ENCODE measurements at regions of chr11 and their contacts with region 1.

Region 1: GRCh38 chr11:84780689-84781293 is 846.4 kb downstream of the DLG2 start:
- DNase-seq: peak; percentile 32
- ATAC-seq: no peak
- H3K4me3 ChIP-seq: no peak overlapping the region
- H3K4me3 Mint-ChIP-seq: no peak overlapping the region
- H3K27ac ChIP-seq: no peak overlapping the region
- H3K27ac Mint-ChIP-seq: no peak overlapping the region
- H3K4me1 ChIP-seq: no peaks in the 10 kb centered on the region
- H3K4me1 Mint-ChIP-seq: no peaks in the 10 kb centered on the region
- H3K27me3 ChIP-seq: no peaks in the 10 kb centered on the region
- H3K27me3 Mint-ChIP-seq: no peaks in the 10 kb centered on the region
- CTCF ChIP-seq: peak; percentile 29

Region 2: GRCh38 chr11:84663731-84664130 is 117.1 kb before region 1 on chr11:
- CTCF ChIA-PET with region 1: no interaction called
- POLR2A ChIA-PET with region 1: no interaction called
- intact Hi-C with region 1: no loop called
- DNase-seq: no peak
- ATAC-seq: no peak
- H3K4me3 ChIP-seq: no peak overlapping the region
- H3K4me3 Mint-ChIP-seq: no peak overlapping the region
- H3K27ac ChIP-seq: no peak overlapping the region
- H3K27ac Mint-ChIP-seq: no peak overlapping the region
- H3K4me1 ChIP-seq: no peaks in the 10 kb centered on the region
- H3K4me1 Mint-ChIP-seq: no peaks in the 10 kb centered on the region
- H3K27me3 ChIP-seq: no peaks in the 10 kb centered on the region
- H3K27me3 Mint-ChIP-seq: no peaks in the 10 kb centered on the region
- CTCF ChIP-seq: no peak

Region 3: DNA sequence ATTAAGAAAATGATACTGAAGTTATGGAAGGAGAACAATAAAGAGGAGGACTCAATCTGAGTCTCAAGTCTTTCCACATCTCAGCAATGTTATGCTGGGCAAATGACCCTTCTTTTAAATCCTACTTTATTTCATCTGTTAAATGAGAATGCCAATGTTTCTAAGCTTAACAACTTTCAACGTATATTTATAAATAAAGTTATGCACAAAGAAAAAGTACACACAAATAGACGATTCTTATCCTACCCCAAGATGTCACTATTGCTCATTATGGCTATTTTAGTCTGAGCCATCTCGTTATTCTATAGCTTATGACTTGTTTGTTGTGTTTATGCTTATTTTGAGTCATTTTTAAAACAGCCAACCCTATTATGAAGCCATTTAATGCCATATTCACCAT is 12.8 kb before region 1 on chr11:
- CTCF ChIA-PET with region 1: interaction called, 12 read pairs
- POLR2A ChIA-PET with region 1: no interaction called
- intact Hi-C with region 1: no loop called
- DNase-seq: no peak
- ATAC-seq: no peak
- H3K4me3 ChIP-seq: no peak overlapping the region
- H3K4me3 Mint-ChIP-seq: no peak overlapping the region
- H3K27ac ChIP-seq: no peak overlapping the region
- H3K27ac Mint-ChIP-seq: no peak overlapping the region
- H3K4me1 ChIP-seq: no peaks in the 10 kb centered on the region
- H3K4me1 Mint-ChIP-seq: no peaks in the 10 kb centered on the region
- H3K27me3 ChIP-seq: no peaks in the 10 kb centered on the region
- H3K27me3 Mint-ChIP-seq: peaks cover 3% of the 10 kb centered on the region
- CTCF ChIP-seq: no peak

Region 4: DNA sequence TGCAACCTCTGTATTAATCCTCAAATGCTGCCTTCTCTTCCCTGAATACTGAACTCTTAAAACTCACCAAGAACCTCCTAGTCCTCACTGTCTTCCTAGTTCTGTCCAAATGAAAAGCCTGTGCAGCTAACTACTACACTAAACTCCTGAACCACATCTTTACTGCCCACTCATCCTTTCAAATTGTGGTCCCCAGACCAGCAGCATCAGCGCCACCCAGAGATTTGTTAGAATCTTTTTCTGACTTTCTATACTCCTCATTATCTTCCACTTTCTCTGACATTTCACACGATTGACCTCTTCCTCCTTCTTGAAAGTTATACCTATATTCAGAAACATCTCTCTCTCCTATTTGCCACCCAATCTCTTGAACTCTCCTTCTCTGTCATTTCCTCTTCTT is 385.0 kb after region 1 on chr11:
- CTCF ChIA-PET with region 1: interaction called, 4 read pairs
- POLR2A ChIA-PET with region 1: no interaction called
- intact Hi-C with region 1: loop called (anchors 10 kb)
- DNase-seq: peak; percentile 4
- ATAC-seq: no peak
- H3K4me3 ChIP-seq: no peak overlapping the region
- H3K4me3 Mint-ChIP-seq: no peak overlapping the region
- H3K27ac ChIP-seq: no peak overlapping the region
- H3K27ac Mint-ChIP-seq: no peak overlapping the region
- H3K4me1 ChIP-seq: peaks cover 0 to 4% of the 10 kb centered on the region in 2 donors
- H3K4me1 Mint-ChIP-seq: peaks cover 13% of the 10 kb centered on the region
- H3K27me3 ChIP-seq: no peaks in the 10 kb centered on the region
- H3K27me3 Mint-ChIP-seq: peaks cover 3% of the 10 kb centered on the region
- CTCF ChIP-seq: no peak